Vagina (tissue), 2 donors: ENCODE measurements at regions of chr9 and their contacts with region 1.

Region 1: GRCh38 chr9:74102702-74103101 is 394.4 kb upstream of the RORB start:
- DNase-seq: no peak
- H3K4me3 ChIP-seq: no peak overlapping the region
- H3K27ac ChIP-seq: no peak overlapping the region
- H3K4me1 ChIP-seq: no peaks in the 10 kb centered on the region
- H3K27me3 ChIP-seq: no peaks in the 10 kb centered on the region
- CTCF ChIP-seq: no peak
- POLR2A ChIP-seq: no peak

Region 2: GRCh38 chr9:73951147-73951546 is 151.6 kb before region 1 on chr9:
- intact Hi-C with region 1: no loop called
- DNase-seq: no peak
- H3K4me3 ChIP-seq: no peak overlapping the region
- H3K27ac ChIP-seq: no peak overlapping the region
- H3K4me1 ChIP-seq: no peaks in the 10 kb centered on the region
- H3K27me3 ChIP-seq: no peaks in the 10 kb centered on the region
- CTCF ChIP-seq: no peak
- POLR2A ChIP-seq: no peak

Region 3: DNA sequence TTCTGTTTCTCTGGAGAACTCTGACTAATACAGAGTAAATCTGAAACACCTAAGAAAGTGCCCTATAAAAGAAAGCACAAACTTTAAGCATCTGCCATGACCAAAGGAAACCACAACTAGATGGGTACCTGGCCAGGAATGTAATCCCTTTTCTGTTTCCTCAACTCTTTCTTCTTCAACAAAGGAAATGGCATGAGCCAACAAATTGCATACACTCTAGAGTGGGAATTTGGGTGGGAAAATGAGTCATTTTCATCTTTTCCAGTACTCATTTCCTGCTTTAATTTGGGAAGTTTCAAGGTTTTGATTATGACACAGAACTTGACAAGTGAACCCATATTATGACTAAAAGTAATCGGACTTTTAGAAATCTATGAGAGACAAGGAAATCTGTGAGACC is 45.2 kb after region 1 on chr9:
- intact Hi-C with region 1: loop called (anchors 2 kb)
- DNase-seq: no peak
- H3K4me3 ChIP-seq: no peak overlapping the region
- H3K27ac ChIP-seq: no peak overlapping the region
- H3K4me1 ChIP-seq: no peaks in the 10 kb centered on the region
- H3K27me3 ChIP-seq: no peaks in the 10 kb centered on the region
- CTCF ChIP-seq: no peak
- POLR2A ChIP-seq: no peak